ENCODE measurements at regions of chr6 and their contacts with region 1.

Region 1: GRCh38 chr6:159104163-159104925 is 59.6 kb upstream of the TAGAP start:
- DNase-seq: peak; percentile 45 to 70
- ATAC-seq: peak; percentile 91

Region 2: GRCh38 chr6:159042003-159042825 is 62.1 kb before region 1 on chr6:
- intact Hi-C with region 1: loop called (anchors 10 kb)
- DNase-seq: peak; percentile 70 to 76
- ATAC-seq: peak; percentile 94

Measured in left colon (tissue), 2 donors.